HCT116 (cell line): ENCODE measurements at regions of chr6 and their contacts with region 1.

Region 1: DNA sequence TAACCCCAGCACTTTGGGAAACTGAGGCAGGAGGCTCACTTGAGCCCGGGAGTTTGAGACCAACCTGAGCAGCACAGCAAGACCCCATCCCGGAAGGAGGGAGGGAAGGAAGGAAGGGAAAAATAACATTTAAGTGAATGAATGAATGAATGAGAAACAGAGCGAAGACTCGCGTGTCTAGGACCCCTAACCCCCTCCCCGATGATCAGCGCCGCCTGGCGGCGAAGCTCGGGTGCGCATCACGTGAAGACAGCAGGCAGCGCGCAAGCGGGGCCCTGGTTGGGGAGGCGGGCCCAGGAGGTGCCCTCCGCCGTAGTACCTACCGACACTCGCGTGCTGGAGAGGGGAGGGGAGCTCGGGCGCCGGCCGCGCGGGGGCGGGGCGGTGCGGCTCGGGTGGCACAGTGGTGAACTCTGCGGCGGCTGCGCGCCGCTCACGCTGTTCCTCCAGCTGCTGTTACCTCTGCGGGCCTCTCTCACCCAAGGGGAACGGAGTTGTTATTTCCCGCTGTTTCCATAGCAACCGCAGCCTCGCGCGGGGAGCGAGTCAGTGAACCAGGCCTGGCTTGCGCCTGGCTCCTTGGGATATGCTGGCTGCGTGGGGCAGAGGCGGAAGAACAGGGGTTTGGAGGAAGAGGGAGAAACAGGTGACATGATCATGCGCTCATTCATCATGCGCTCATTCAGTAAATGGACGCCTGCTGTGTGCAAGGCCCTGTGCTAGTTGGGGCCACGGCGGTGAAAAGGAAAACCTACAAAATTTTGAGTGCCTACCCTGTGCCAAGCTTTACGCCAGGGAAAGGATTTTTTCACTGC is 2.0 kb upstream of the DCDC2 start:
- DNase-seq: peak; percentile 71
- ATAC-seq: peak; percentile 99
- H3K4me3 ChIP-seq: peak overlapping the region; percentile 35 to 56
- H3K27ac ChIP-seq: no peak overlapping the region
- H3K4me1 ChIP-seq: peaks cover 3 to 12% of the 10 kb centered on the region in 2 experiments; a peak in 3 of 4 replicates
- H3K27me3 ChIP-seq: no peaks in the 10 kb centered on the region
- CTCF ChIP-seq: peak; percentile 63 to 93 (median 92)
- POLR2A ChIP-seq: no peak
- RAD21 ChIP-seq: peak; percentile 40

Region 2: GRCh38 chr6:24147511-24148149 is 212.2 kb before region 1 on chr6:
- CTCF ChIA-PET with region 1: no interaction called
- POLR2A ChIA-PET with region 1: no interaction called
- RAD21 ChIA-PET with region 1: no interaction called
- intact Hi-C with region 1: no loop called
- DNase-seq: no peak
- ATAC-seq: no peak
- H3K4me3 ChIP-seq: no peak overlapping the region
- H3K27ac ChIP-seq: no peak overlapping the region
- H3K4me1 ChIP-seq: no peaks in the 10 kb centered on the region
- H3K27me3 ChIP-seq: no peaks in the 10 kb centered on the region
- CTCF ChIP-seq: no peak
- POLR2A ChIP-seq: no peak
- RAD21 ChIP-seq: no peak

Region 3: DNA sequence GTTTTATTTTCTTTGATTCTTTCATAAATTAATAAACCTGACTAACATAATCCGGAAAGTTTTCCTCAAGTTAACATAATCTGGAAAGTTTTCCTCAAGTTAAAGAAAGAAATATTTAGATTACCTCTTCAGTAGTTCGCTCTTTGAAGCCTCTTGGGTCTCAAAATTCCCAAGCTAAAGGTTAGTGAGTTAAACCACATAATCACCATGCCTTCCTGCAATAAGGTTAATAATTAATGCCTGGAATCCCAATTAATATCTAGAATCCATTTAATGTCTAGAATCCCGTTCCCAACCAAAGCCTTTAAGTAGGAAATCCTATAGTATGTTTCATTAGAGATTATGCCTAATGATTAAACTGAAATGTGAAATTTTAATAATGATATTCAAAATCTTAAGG is 14.9 kb before region 1 on chr6:
- CTCF ChIA-PET with region 1: interaction called, 12 read pairs
- POLR2A ChIA-PET with region 1: no interaction called
- RAD21 ChIA-PET with region 1: no interaction called
- intact Hi-C with region 1: no loop called
- DNase-seq: no peak
- ATAC-seq: no peak
- H3K4me3 ChIP-seq: no peak overlapping the region
- H3K27ac ChIP-seq: no peak overlapping the region
- H3K4me1 ChIP-seq: no peaks in the 10 kb centered on the region
- H3K27me3 ChIP-seq: peaks cover 22% of the 10 kb centered on the region; the same call in 1 of the 2 replicates
- CTCF ChIP-seq: no peak
- POLR2A ChIP-seq: no peak
- RAD21 ChIP-seq: no peak

Region 4: DNA sequence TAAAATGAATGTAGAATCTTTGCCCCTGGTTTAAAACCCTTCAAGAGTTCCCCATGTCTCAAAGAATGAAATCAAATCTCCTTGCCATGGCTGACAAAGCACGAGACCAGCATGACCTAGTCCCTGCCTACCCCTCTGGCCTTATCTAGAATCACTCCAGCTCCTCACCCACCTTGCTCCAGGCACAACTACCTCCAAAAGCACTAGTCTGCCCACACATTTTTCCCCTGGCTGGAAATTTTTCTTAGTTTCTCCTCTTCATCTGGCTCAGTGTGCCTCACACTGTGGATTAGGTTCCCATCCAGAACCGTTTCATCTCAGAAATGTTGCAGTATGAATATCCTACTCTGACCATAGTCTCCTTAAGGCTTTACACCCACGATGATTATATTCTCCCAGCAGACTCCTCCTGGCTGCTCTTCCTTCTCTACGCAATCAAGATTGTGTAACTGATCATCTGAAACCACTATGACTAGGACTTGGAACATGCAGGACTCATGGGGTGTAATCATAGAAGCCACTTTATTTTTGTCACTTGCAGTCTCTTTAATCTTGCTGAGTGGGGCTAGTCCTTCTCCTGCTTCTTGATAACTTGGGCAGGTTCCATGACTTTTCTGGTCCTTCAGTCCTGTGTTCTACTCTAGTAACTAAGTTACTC is 35.1 kb after region 1 on chr6:
- CTCF ChIA-PET with region 1: interaction called, 16 read pairs
- POLR2A ChIA-PET with region 1: no interaction called
- RAD21 ChIA-PET with region 1: no interaction called
- intact Hi-C with region 1: no loop called
- DNase-seq: no peak
- ATAC-seq: no peak
- H3K4me3 ChIP-seq: no peak overlapping the region
- H3K27ac ChIP-seq: no peak overlapping the region
- H3K4me1 ChIP-seq: no peaks in the 10 kb centered on the region
- H3K27me3 ChIP-seq: no peaks in the 10 kb centered on the region
- CTCF ChIP-seq: no peak
- POLR2A ChIP-seq: no peak
- RAD21 ChIP-seq: no peak